ENCODE measurements at regions of chr3 and their contacts with region 1.

Region 1: GRCh38 chr3:189270248-189270832 is 98.6 kb downstream of the TPRG1 start:
- DNase-seq: peak; percentile 83 to 86
- H3K4me3 ChIP-seq: no peak overlapping the region
- H3K27ac ChIP-seq: no peak overlapping the region
- H3K4me1 ChIP-seq: no peaks in the 10 kb centered on the region
- H3K27me3 ChIP-seq: no peaks in the 10 kb centered on the region
- CTCF ChIP-seq: peak; percentile 78

Region 2: DNA sequence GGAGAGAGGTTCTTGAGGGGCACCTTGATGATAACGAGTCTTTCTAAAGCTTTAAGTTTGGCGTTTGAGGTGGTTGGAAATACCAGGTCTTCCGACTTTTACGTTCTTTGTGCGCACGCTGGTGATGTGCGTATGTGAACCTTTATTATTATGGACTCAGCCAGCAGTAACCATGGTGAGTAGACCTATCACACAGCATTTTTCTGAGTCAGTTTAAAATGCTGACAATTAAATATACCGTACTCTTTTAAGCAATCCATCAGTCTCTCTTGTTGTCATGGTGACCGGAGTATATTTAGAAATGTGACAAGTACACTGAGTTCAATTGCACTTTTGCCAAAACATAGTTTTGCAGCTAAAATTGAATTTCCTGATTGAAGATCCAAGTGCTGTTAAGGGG is 944.2 kb before region 1 on chr3:
- CTCF ChIA-PET with region 1: no interaction called
- POLR2A ChIA-PET with region 1: no interaction called
- intact Hi-C with region 1: no loop called
- DNase-seq: no peak
- H3K4me3 ChIP-seq: no peak overlapping the region
- H3K27ac ChIP-seq: no peak overlapping the region
- H3K4me1 ChIP-seq: no peaks in the 10 kb centered on the region
- H3K27me3 ChIP-seq: no peaks in the 10 kb centered on the region
- CTCF ChIP-seq: no peak

Region 3: DNA sequence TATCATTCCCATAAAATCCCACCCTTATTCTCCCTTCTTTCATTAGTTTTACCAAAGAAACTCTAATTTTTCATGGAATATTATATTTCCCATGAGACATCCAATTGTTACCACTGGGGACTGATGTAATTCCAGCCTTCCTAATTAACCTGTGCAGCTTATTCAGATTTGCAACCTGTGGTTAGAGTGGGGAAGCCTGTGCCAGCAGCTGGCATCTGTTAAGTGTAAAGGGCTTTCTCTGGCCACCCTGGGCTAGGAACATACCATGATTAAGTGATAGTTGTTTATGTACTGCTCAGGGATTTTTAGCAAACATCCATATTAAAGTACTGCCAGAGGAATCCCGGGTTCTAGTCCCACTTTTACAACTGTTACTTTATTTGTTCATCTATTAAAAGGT is 20.4 kb before region 1 on chr3:
- CTCF ChIA-PET with region 1: no interaction called
- POLR2A ChIA-PET with region 1: no interaction called
- intact Hi-C with region 1: no loop called
- DNase-seq: no peak
- H3K4me3 ChIP-seq: no peak overlapping the region
- H3K27ac ChIP-seq: no peak overlapping the region
- H3K4me1 ChIP-seq: no peaks in the 10 kb centered on the region
- H3K27me3 ChIP-seq: no peaks in the 10 kb centered on the region
- CTCF ChIP-seq: no peak

Region 4: DNA sequence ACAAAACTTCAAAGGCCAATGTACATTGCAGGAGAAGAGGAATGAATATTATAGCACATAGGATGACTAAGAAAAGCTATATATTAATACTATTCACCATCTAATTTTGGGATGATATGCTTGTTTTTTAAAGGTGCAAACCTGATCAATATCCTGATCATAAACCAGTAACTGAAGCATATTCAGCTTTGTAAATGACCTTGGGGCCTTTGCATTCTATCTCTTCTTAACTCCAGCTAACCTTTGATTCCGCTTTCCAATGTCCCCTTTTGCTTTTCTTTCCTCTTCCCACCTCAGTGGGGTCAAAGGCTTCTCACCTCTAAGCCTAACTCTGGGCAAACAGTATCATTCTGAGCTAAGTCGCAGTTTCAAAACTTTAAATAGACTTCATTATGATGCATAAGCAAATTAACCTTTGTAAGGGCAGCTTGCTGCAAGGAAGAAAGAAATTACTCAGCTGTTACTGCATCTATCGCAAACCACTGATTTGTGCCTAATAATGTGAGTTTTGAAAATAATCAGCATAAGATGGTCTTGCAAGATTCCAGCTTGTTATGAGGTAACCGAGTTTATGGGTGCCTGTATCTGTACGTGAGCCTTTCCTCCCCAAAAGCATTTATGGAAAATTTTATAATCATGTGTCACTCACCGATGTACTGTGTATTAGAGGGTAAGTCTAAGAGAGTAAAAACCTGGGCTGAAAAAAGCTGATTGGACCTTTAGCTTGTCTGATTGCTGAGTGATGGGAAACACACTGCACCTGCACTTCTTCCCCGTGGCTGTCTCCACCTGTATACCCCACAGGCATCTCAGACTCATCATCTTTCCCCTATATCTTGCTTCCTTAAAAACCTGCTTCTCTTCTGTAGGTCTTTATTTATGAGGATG is 18.3 kb after region 1 on chr3:
- CTCF ChIA-PET with region 1: no interaction called
- POLR2A ChIA-PET with region 1: no interaction called
- intact Hi-C with region 1: no loop called
- DNase-seq: no peak
- H3K4me3 ChIP-seq: no peak overlapping the region
- H3K27ac ChIP-seq: no peak overlapping the region
- H3K4me1 ChIP-seq: peaks cover 11% of the 10 kb centered on the region
- H3K27me3 ChIP-seq: no peaks in the 10 kb centered on the region
- CTCF ChIP-seq: no peak

Region 5: DNA sequence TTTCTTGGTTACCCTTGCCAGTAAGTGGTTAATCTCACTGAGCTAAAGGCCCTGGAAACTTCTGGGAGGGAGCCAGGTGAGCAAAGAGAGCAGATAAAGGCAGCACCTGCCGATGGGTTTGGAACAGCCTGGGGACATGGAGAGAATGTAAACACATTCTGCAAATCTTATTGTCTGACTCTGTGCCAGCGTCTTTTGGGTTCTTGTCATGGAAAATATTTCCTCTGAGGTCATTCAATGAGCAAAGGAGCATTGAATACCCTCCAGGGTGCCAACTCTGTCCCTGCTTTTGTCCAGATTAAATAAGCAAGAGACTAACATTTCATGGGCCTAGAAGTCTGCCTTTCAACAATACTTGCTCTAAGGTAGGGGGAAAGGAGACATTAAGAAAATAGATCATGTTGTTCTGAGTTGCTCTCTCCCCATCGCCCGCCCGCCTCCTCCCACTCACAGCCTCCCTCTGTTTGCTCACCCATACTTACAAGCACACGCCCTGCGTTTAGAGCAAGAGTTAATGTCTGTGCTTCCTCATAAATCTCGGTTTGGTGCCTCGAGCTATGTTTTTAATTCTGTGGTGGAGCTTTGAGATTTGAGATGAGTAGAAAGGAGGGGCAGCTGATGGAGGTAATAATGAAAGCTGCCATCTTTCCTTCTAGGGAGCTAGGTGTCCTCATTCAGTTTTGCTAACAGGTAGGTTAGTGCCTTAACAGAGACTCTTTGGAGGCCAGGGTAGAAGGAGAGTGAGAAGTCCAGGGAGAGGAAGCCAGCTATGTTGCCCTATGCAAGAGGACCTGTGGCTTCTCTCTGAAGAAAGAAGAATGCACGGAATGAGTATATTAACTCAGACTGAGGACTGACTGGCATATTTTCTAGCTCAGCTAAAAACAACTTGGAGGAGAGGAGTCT is 34.4 kb after region 1 on chr3:
- CTCF ChIA-PET with region 1: interaction called, 17 read pairs
- POLR2A ChIA-PET with region 1: interaction called, 3 read pairs
- intact Hi-C with region 1: loop called (anchors 1 kb)
- DNase-seq: peak; percentile 93 to 99
- H3K4me3 ChIP-seq: peak overlapping the region; percentile 27; the same call in 1 of the 2 replicates
- H3K27ac ChIP-seq: peak overlapping the region; percentile 85
- H3K4me1 ChIP-seq: peaks cover 44% of the 10 kb centered on the region
- H3K27me3 ChIP-seq: no peaks in the 10 kb centered on the region
- CTCF ChIP-seq: no peak

Region 6: DNA sequence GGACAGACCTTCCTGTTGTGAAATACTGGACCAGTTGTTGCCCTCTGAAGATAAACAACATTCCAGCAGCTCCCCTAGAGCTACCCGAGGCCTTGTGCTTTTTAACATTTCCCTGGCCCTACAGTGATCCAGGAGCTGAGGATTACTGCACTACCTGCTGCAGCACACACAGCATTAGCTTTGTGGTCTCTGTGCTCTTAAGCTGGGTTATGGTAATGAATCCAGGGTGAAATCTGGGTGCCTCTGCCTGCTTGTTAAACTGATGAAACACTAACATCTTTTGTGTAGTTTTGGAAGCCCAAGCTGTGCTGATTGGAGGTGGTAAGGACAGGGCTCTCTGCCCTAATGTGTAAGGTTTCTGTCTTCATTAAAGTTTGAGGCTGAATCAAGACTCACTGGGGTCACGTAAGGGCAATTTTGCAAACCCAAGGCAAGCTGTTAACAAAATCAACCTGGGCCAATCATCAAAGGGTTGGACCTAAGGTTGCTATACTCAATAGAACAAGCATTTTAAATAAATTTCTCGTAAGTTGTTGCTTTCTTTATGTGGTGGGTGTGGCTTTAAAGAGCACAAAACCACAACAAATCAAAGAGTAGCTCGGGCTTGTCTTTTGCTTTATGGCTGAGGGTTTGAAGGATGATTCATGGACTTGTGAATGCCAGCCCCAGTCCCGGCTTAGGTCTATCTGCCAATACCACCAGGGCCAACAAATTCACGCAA is 85.3 kb after region 1 on chr3:
- CTCF ChIA-PET with region 1: interaction called, 3 read pairs
- POLR2A ChIA-PET with region 1: no interaction called
- intact Hi-C with region 1: loop called (anchors 1 kb)
- DNase-seq: peak in 1 of 2 experiments; percentile 44
- H3K4me3 ChIP-seq: no peak overlapping the region
- H3K27ac ChIP-seq: peak overlapping the region; percentile 57
- H3K4me1 ChIP-seq: peaks cover 33% of the 10 kb centered on the region
- H3K27me3 ChIP-seq: no peaks in the 10 kb centered on the region
- CTCF ChIP-seq: no peak

Region 7: DNA sequence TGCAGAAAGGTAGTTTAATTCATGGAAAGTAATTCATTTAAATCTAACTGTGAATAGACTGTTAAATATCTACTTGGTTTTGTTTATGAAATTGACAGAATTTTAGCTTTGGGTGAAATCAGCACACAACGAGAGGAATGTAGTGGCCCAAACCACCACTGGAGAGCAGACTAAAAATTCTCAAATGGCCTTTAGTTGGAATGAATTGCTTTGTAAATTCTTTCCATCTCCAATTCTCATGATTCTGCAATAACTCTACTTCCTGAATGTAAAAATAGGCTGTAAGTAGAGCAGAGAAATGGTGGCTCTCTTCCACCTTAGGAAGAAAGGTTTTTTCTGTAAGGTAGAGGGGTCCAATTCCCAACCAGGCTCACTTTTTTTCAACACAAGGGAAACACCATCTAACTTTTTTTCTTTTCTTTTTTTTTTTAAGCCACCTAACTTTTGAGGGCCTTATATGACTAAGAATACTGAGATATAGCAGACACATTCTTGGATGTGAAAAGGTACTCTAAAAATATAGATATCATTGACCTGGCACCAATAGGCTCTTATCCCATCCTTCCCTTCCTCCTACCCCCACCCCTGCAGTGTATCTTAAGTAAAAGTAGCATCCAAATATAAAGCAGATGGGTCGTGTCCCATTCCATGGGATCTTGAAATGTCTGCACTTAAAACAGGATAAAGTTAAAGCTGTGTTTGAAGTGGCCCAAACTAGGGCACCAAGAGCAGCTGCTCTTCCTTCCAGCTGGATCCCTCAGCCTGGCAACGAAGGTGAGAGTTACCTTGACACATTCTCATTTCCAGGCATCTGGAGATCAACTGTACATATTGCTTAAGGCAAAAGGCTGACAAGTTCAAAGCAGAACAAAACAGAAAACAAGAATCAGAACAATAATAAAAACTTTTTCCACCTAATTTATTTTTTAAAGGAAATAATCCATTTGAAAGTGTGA is 95.5 kb after region 1 on chr3:
- CTCF ChIA-PET with region 1: no interaction called
- POLR2A ChIA-PET with region 1: no interaction called
- intact Hi-C with region 1: no loop called
- DNase-seq: no peak
- H3K4me3 ChIP-seq: no peak overlapping the region
- H3K27ac ChIP-seq: no peak overlapping the region
- H3K4me1 ChIP-seq: no peaks in the 10 kb centered on the region
- H3K27me3 ChIP-seq: no peaks in the 10 kb centered on the region
- CTCF ChIP-seq: no peak

Region 8: DNA sequence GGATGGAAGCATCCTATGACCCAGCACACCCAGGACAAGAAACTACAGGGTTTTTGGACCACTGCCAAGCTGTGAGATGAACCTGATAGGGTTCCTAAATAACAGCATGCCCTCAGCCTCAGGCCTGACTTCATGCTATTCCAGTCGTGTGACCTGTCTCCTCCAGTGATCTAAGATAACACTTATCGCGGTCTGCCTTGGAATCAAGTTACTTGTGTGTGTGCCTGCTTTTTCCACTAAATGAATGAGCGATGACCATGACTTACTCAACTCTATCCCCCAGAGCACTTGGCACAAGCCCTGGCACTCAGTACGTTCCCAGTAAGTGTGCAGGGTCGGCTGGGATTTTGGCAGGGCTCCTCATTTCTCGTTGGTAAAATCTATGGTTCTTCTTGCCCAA is 188.2 kb after region 1 on chr3:
- CTCF ChIA-PET with region 1: interaction called, 4 read pairs
- POLR2A ChIA-PET with region 1: no interaction called
- intact Hi-C with region 1: loop called (anchors 1 kb)
- DNase-seq: peak; percentile 84 to 86
- H3K4me3 ChIP-seq: no peak overlapping the region
- H3K27ac ChIP-seq: no peak overlapping the region
- H3K4me1 ChIP-seq: peaks cover 11% of the 10 kb centered on the region
- H3K27me3 ChIP-seq: no peaks in the 10 kb centered on the region
- CTCF ChIP-seq: no peak

Region 9: DNA sequence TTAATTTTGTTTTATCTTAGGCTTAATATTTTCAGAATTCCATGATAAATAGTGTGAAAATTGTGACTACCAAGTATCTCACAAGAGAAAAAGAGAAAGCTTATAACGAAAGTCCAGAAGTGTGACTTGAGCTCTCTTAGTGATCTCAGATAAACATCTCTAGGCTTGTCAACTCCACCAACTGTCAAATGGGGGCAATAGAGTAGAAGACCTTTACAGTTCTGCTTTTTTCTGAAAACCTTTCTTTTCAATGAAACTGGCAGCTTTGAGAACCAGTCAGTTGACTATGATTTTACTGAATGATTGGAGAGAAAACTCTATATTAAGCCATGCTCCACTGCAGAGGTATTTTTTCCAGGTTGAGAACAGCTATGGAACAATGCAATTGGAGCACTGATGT is 241.7 kb after region 1 on chr3:
- CTCF ChIA-PET with region 1: interaction called, 4 read pairs
- POLR2A ChIA-PET with region 1: no interaction called
- intact Hi-C with region 1: loop called (anchors 1 kb)
- DNase-seq: no peak
- H3K4me3 ChIP-seq: no peak overlapping the region
- H3K27ac ChIP-seq: peak overlapping the region; percentile 61; the same call in 1 of the 2 replicates
- H3K4me1 ChIP-seq: peaks cover 27% of the 10 kb centered on the region
- H3K27me3 ChIP-seq: no peaks in the 10 kb centered on the region
- CTCF ChIP-seq: no peak

Region 10: DNA sequence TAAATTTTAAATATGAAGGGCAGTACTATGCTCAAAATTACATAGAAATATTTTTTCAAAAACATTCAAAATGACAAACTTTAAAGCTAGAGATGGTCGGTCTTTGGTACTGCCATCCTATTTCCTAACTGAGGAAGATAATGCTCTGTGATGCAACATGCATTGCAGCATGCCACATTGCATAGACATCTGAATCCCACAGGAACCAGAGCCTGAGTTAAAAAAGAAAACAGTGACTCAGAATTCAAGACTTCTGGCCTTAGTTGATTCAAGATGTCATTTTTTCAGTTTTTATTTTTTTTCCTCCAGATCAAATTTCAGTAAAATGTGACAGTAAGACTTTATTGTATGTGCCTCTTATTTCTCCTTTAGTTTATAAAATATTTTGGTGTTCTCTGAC is 394.0 kb after region 1 on chr3:
- CTCF ChIA-PET with region 1: no interaction called
- POLR2A ChIA-PET with region 1: no interaction called
- intact Hi-C with region 1: loop called (anchors 10 kb)
- DNase-seq: peak; percentile 51 to 83
- H3K4me3 ChIP-seq: no peak overlapping the region
- H3K27ac ChIP-seq: peak overlapping the region; percentile 51
- H3K4me1 ChIP-seq: peaks cover 15% of the 10 kb centered on the region
- H3K27me3 ChIP-seq: no peaks in the 10 kb centered on the region
- CTCF ChIP-seq: no peak

Measured in PC-9 (cell line).